ENCODE measurements at regions of chr10 and their contacts with region 1.

Region 1: GRCh38 chr10:118358327-118358726 is 16.2 kb upstream of the FAM204A start:
- DNase-seq: no peak
- ATAC-seq: no peak
- H3K4me3 ChIP-seq: no peak overlapping the region
- H3K27ac ChIP-seq: no peak overlapping the region
- H3K4me1 ChIP-seq: no peaks in the 10 kb centered on the region
- H3K27me3 ChIP-seq: no peaks in the 10 kb centered on the region
- CTCF ChIP-seq: no peak
- POLR2A ChIP-seq: no peak
- RAD21 ChIP-seq: no peak

Region 2: DNA sequence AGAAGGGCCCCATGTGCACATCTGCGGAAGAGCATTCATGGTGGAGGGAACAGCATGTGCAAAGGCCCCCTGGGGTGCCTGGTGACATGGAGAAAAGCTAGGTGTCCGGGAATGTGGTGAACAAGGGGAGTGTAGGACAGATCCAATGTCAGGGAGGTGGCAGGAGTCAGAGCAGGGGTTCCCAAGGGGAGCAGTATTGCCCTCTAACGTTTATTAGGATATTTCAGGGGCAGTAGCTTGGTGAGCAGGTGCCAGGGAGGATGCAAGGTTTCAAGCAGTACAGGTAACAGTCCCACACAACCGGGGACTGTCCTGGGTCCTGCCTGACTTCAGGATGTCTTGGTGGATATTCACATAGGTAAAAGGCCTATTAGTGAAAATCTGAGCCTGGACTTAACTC is 606.2 kb before region 1 on chr10:
- CTCF ChIA-PET with region 1: no interaction called
- POLR2A ChIA-PET with region 1: no interaction called
- dilution Hi-C with region 1: no loop called
- in situ Hi-C with region 1: no loop called
- intact Hi-C with region 1: no loop called
- DNase-seq: no peak
- ATAC-seq: no peak
- H3K4me3 ChIP-seq: no peak overlapping the region
- H3K27ac ChIP-seq: no peak overlapping the region
- H3K4me1 ChIP-seq: no peaks in the 10 kb centered on the region
- H3K27me3 ChIP-seq: no peaks in the 10 kb centered on the region
- CTCF ChIP-seq: no peak
- POLR2A ChIP-seq: no peak
- RAD21 ChIP-seq: no peak

Region 3: DNA sequence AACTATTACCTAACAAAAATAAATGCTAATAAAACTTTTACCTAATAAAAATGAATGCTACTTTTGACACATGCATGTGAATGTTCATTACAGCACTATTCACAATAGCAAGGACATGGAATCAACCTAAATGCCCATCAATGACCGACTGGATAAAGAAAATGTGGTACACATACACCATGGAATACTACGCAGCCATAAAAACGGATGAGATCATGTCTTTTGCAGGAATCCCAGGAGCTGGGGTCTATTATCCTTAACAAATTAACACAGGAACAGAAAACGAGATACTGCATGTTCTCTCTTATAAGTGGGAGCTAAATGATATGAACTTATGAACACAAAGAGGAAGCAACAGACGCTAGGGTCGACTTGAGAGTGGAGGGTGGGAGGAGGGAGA is 71.9 kb after region 1 on chr10:
- CTCF ChIA-PET with region 1: no interaction called
- POLR2A ChIA-PET with region 1: no interaction called
- dilution Hi-C with region 1: no loop called
- in situ Hi-C with region 1: no loop called
- intact Hi-C with region 1: loop called (anchors 5 kb)
- DNase-seq: no peak
- ATAC-seq: no peak
- H3K4me3 ChIP-seq: no peak overlapping the region
- H3K27ac ChIP-seq: no peak overlapping the region
- H3K4me1 ChIP-seq: no peaks in the 10 kb centered on the region
- H3K27me3 ChIP-seq: no peaks in the 10 kb centered on the region
- CTCF ChIP-seq: no peak
- POLR2A ChIP-seq: no peak
- RAD21 ChIP-seq: no peak

Measured in IMR-90 (cell line).